ENCODE measurements at regions of chr5 and their contacts with region 1.

Region 1: GRCh38 chr5:127536687-127537086 is 19.2 kb downstream of the PRRC1 start:
- DNase-seq: peak in 2 of 9 donors; percentile 3 to 9
- ATAC-seq: no peak
- H3K4me3 ChIP-seq: no peak overlapping the region
- H3K4me3 Mint-ChIP-seq: no peak overlapping the region
- H3K27ac ChIP-seq: no peak overlapping the region
- H3K27ac Mint-ChIP-seq: no peak overlapping the region
- H3K4me1 ChIP-seq: no peaks in the 10 kb centered on the region
- H3K4me1 Mint-ChIP-seq: peaks cover 0 to 26% (median 13%) of the 10 kb centered on the region in 7 donors
- H3K27me3 ChIP-seq: no peaks in the 10 kb centered on the region
- H3K27me3 Mint-ChIP-seq: no peaks in the 10 kb centered on the region

Region 2: GRCh38 chr5:127451096-127451495 is 85.6 kb before region 1 on chr5:
- CTCF ChIA-PET with region 1: no interaction called
- POLR2A ChIA-PET with region 1: no interaction called
- intact Hi-C with region 1: no loop called
- DNase-seq: no peak
- ATAC-seq: no peak
- H3K4me3 ChIP-seq: no peak overlapping the region
- H3K4me3 Mint-ChIP-seq: no peak overlapping the region
- H3K27ac ChIP-seq: no peak overlapping the region
- H3K27ac Mint-ChIP-seq: no peak overlapping the region
- H3K4me1 ChIP-seq: no peaks in the 10 kb centered on the region
- H3K4me1 Mint-ChIP-seq: no peaks in the 10 kb centered on the region
- H3K27me3 ChIP-seq: no peaks in the 10 kb centered on the region
- H3K27me3 Mint-ChIP-seq: peaks cover 0 to 16% (median 4%) of the 10 kb centered on the region in 5 donors

Region 3: DNA sequence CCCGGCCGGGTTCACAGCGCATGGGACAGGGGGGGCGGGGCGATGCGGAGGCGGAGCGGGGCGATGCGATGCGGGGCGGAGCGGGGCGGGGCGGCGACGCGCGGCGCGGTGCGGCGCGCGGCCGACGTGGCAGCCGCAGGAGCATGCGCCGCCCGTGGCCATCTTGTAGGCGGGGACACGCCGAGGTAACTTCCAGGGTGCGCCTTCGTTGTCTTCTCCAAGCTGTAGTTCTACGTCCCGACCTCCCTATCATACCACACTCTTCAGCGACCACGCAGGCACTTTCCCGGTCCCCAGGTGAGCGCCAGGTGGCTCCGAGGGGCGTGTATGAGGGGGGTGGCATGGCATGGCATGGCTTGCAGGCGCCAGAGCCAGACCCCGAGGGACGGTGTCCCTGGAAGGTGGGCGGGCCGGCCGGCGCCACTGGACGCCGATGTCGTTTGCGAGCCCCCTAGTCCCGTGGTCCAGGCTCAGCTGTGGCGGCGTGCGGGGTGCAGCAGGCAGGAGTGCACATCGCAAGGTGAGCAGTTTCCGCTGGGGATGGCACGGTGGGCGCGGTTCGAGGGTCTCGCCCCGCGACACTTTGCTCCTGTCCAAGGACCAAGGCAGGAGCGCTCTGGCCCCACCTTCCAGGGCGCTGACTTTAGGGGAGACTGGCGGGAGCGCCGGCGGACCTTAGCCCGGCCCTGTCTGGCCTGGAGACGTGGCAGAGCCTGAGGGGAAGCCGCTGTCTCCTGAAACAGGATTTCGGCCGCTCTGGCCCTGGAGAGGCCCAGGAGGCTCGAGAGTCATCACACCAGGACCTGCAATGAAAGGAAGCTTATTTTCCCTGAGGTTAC is 19.0 kb before region 1 on chr5 and contains the start of gene PRRC1:
- CTCF ChIA-PET with region 1: no interaction called
- POLR2A ChIA-PET with region 1: no interaction called
- intact Hi-C with region 1: loop called in 1 of 2 experiments (anchors 2 kb)
- DNase-seq: peak; percentile 63 to 80 (median 74)
- ATAC-seq: peak; percentile 99
- H3K4me3 ChIP-seq: peak within 1 kb of the TSS; percentile 94
- H3K4me3 Mint-ChIP-seq: peak within 1 kb of the TSS; percentile 87 to 92 (median 89)
- H3K27ac ChIP-seq: peak within 1 kb of the TSS; percentile 89
- H3K27ac Mint-ChIP-seq: peak within 1 kb of the TSS; percentile 48 to 91 (median 82)
- H3K4me1 ChIP-seq: peaks cover 0 to 18% of the 10 kb centered on the region in 2 donors
- H3K4me1 Mint-ChIP-seq: peaks cover 25 to 48% (median 38%) of the 10 kb centered on the region in 7 donors
- H3K27me3 ChIP-seq: no peaks in the 10 kb centered on the region
- H3K27me3 Mint-ChIP-seq: peaks cover under 1 to 7% (median 6%) of the 10 kb centered on the region in 5 donors
- total RNA-seq, gene PRRC1: 34.6 to 56.6 (median 49.4) TPM

Region 4: DNA sequence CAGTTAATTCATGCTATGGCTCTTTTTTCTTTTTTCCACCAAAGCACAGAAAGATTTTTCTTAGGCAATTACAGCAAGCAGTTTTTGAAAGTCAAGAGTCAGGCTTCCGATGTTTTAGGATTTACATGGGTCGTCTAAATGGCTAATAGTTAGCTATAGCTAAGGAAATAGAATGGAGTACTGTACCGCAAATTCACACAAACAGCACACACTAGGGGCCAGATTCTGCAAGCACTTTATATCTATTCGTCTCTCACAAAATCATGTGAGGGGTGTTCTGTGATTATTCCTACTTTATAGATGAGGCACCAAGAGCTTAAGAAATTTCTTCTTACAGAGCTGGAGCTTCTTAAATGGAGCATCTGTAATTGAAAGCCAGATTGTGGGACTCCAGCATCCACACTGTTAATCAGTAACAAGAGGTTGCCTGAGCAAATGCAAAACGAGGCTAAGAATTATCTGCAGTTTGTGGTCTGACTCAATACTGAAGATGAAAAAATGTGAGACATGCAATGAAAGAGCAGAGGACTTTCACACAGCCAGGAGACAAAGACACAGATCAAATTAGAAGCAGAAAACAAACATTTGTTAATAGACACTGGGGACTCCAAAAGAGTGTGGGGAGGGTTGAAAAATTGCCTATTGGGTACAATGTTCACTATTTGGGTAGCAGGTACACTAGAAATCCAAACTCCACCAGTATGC is 49.5 kb after region 1 on chr5:
- CTCF ChIA-PET with region 1: no interaction called
- POLR2A ChIA-PET with region 1: no interaction called
- intact Hi-C with region 1: no loop called
- DNase-seq: no peak
- ATAC-seq: no peak
- H3K4me3 ChIP-seq: no peak overlapping the region
- H3K4me3 Mint-ChIP-seq: no peak overlapping the region
- H3K27ac ChIP-seq: no peak overlapping the region
- H3K27ac Mint-ChIP-seq: no peak overlapping the region
- H3K4me1 ChIP-seq: no peaks in the 10 kb centered on the region
- H3K4me1 Mint-ChIP-seq: no peaks in the 10 kb centered on the region
- H3K27me3 ChIP-seq: no peaks in the 10 kb centered on the region
- H3K27me3 Mint-ChIP-seq: peaks cover 2 to 26% (median 13%) of the 10 kb centered on the region in 5 donors